ENCODE measurements at regions of chr2 and their contacts with region 1.

Region 1: GRCh38 chr2:150520887-150521664 is 33.6 kb upstream of the RND3 start:
- DNase-seq: no peak
- ATAC-seq: peak; percentile 89
- H3K4me3 ChIP-seq: no peak overlapping the region
- H3K27ac ChIP-seq: no peak overlapping the region
- H3K4me1 ChIP-seq: no peaks in the 10 kb centered on the region
- H3K27me3 ChIP-seq: no peaks in the 10 kb centered on the region
- CTCF ChIP-seq: no peak
- EP300 ChIP-seq: no peak
- POLR2A ChIP-seq: no peak
- RAD21 ChIP-seq: no peak

Region 2: GRCh38 chr2:150508497-150509137 is 12.5 kb before region 1 on chr2:
- CTCF ChIA-PET with region 1: interaction called, 3 read pairs
- POLR2A ChIA-PET with region 1: interaction called, 3 read pairs
- RAD21 ChIA-PET with region 1: interaction called, 5 read pairs
- SMC1A ChIA-PET with region 1: interaction called, 22 read pairs
- in situ Hi-C with region 1: no loop called
- intact Hi-C with region 1: no loop called
- DNase-seq: no peak
- ATAC-seq: no peak
- H3K4me3 ChIP-seq: no peak overlapping the region
- H3K27ac ChIP-seq: no peak overlapping the region
- H3K4me1 ChIP-seq: no peaks in the 10 kb centered on the region
- H3K27me3 ChIP-seq: no peaks in the 10 kb centered on the region; a peak in 1 of 4 replicates
- CTCF ChIP-seq: no peak
- EP300 ChIP-seq: no peak
- POLR2A ChIP-seq: no peak
- RAD21 ChIP-seq: no peak

Region 3: GRCh38 chr2:150570712-150571111 is 49.6 kb after region 1 on chr2:
- CTCF ChIA-PET with region 1: interaction called, 6 read pairs
- POLR2A ChIA-PET with region 1: interaction called, 4 read pairs
- RAD21 ChIA-PET with region 1: interaction called, 46 read pairs
- SMC1A ChIA-PET with region 1: interaction called, 123 read pairs
- in situ Hi-C with region 1: no loop called
- intact Hi-C with region 1: no loop called
- DNase-seq: no peak
- ATAC-seq: no peak
- H3K4me3 ChIP-seq: no peak overlapping the region
- H3K27ac ChIP-seq: no peak overlapping the region
- H3K4me1 ChIP-seq: peaks cover 3% of the 10 kb centered on the region; the same call in 1 of the 2 replicates
- H3K27me3 ChIP-seq: no peaks in the 10 kb centered on the region
- CTCF ChIP-seq: no peak
- EP300 ChIP-seq: no peak
- POLR2A ChIP-seq: no peak
- RAD21 ChIP-seq: no peak

Measured in GM12878 (cell line).